Spleen (tissue), 13 donors: ENCODE measurements at regions of chr6 and their contacts with region 1.

Region 1: DNA sequence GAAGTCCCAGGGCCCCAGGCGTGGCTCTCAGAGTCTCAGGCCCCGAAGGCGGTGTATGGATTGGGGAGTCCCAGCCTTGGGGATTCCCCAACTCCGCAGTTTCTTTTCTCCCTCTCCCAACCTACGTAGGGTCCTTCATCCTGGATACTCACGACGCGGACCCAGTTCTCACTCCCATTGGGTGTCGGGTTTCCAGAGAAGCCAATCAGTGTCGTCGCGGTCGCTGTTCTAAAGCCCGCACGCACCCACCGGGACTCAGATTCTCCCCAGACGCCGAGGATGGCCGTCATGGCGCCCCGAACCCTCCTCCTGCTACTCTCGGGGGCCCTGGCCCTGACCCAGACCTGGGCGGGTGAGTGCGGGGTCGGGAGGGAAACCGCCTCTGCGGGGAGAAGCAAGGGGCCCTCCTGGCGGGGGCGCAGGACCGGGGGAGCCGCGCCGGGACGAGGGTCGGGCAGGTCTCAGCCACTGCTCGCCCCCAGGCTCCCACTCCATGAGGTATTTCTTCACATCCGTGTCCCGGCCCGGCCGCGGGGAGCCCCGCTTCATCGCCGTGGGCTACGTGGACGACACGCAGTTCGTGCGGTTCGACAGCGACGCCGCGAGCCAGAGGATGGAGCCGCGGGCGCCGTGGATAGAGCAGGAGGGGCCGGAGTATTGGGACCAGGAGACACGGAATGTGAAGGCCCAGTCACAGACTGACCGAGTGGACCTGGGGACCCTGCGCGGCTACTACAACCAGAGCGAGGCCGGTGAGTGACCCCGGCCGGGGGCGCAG is at the start of gene HLA-A:
- DNase-seq: peak; percentile 94
- H3K4me3 ChIP-seq: peak within 1 kb of the TSS; percentile 39 to 79 (median 56)
- H3K27ac ChIP-seq: peak within 1 kb of the TSS; percentile 63 to 96 (median 92)
- H3K4me1 ChIP-seq: peaks cover 3 to 58% (median 17%) of the 10 kb centered on the region in 6 donors
- H3K27me3 ChIP-seq: no peaks in the 10 kb centered on the region
- CTCF ChIP-seq: no peak
- POLR2A ChIP-seq: peak; percentile 88 to 95 (median 92)
- total RNA-seq, gene HLA-A: 1,154 to 1,886 (median 1,537) TPM

Region 2: GRCh38 chr6:29705389-29706231 is 236.9 kb before region 1 on chr6:
- intact Hi-C with region 1: no loop called
- DNase-seq: no peak
- H3K4me3 ChIP-seq: no peak overlapping the region
- H3K27ac ChIP-seq: peak overlapping the region in 2 of 8 donors; percentile 41 to 85
- H3K4me1 ChIP-seq: peaks cover 0 to 45% (median 19%) of the 10 kb centered on the region in 6 donors
- H3K27me3 ChIP-seq: peaks cover 0 to 18% (median 0%) of the 10 kb centered on the region in 7 donors
- CTCF ChIP-seq: peak; percentile 29 to 82 (median 65)
- POLR2A ChIP-seq: no peak

Region 3: DNA sequence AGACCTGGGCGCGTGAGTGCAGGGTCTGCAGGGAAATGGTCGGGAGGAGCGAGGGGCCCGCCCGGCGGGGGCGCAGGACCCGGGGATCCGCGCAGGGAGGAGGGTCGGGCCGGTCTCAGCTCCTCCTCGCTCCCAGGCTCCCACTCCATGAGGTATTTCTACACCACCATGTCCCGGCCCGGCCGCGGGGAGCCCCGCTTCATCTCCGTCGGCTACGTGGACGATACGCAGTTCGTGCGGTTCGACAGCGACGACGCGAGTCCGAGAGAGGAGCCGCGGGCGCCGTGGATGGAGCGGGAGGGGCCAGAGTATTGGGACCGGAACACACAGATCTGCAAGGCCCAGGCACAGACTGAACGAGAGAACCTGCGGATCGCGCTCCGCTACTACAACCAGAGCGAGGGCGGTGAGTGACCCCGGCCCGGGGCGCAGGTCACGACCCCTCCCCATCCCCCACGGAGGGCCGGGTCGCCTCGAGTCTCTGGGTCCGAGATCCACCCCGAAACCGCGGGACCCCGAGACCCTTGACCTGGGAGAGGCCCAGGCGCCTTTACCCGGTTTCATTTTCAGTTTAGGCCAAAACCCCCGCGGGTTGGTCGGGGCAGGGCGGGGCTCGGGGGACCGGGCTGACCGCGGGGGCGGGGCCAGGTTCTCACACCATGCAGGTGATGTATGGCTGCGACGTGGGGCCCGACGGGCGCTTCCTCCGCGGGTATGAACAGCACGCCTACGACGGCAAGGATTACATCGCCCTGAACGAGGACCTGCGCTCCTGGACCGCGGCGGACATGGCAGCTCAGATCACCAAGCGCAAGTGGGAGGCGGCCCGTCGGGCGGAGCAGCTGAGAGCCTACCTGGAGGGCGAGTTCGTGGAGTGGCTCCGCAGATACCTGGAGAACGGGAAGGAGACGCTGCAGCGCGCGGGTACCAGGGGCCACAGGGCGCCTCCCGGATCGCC is 54.4 kb before region 1 on chr6:
- intact Hi-C with region 1: loop called (anchors 10 kb)
- DNase-seq: peak; percentile 96
- H3K4me3 ChIP-seq: peak overlapping the region in 7 of 8 donors; percentile 44 to 87 (median 52)
- H3K27ac ChIP-seq: peak overlapping the region in 7 of 8 donors; percentile 85 to 97 (median 88)
- H3K4me1 ChIP-seq: peaks cover 0 to 9% (median 7%) of the 10 kb centered on the region in 6 donors
- H3K27me3 ChIP-seq: no peaks in the 10 kb centered on the region
- CTCF ChIP-seq: no peak
- POLR2A ChIP-seq: no peak

Region 4: GRCh38 chr6:30102970-30103874 is 160.8 kb after region 1 on chr6:
- intact Hi-C with region 1: no loop called
- DNase-seq: peak; percentile 91
- H3K4me3 ChIP-seq: peak overlapping the region; percentile 6 to 69 (median 26)
- H3K27ac ChIP-seq: peak overlapping the region in 7 of 8 donors; percentile 50 to 67 (median 60)
- H3K4me1 ChIP-seq: peaks cover 24 to 41% (median 33%) of the 10 kb centered on the region in 6 donors
- H3K27me3 ChIP-seq: peaks cover 0 to 91% (median 41%) of the 10 kb centered on the region in 7 donors
- CTCF ChIP-seq: peak; percentile 85 to 95 (median 93)
- POLR2A ChIP-seq: no peak